Activated naive CD8-positive, alpha-beta T cell treated with anti-CD3 and anti-CD28 coated beads, Interleukin-2, amount 10 ng/mL, durations not matched to agents 7 days and 5 days (primary cell): ENCODE measurements at regions of chr14 and their contacts with region 1.

Region 1: GRCh38 chr14:21263656-21264411 is 5.4 kb downstream of the HNRNPC start:
- DNase-seq: no peak
- ATAC-seq: peak; percentile 71
- H3K4me3 Mint-ChIP-seq: peak overlapping the region; percentile 99
- H3K27ac Mint-ChIP-seq: peak overlapping the region; percentile 81
- H3K4me1 Mint-ChIP-seq: peaks cover 69% of the 10 kb centered on the region
- H3K27me3 Mint-ChIP-seq: no peaks in the 10 kb centered on the region

Region 2: GRCh38 chr14:21197418-21198205 is 66.2 kb before region 1 on chr14:
- POLR2A ChIA-PET with region 1: no interaction called
- DNase-seq: no peak
- ATAC-seq: no peak
- H3K4me3 Mint-ChIP-seq: no peak overlapping the region
- H3K27ac Mint-ChIP-seq: no peak overlapping the region
- H3K4me1 Mint-ChIP-seq: no peaks in the 10 kb centered on the region
- H3K27me3 Mint-ChIP-seq: peaks cover 11% of the 10 kb centered on the region

Region 3: DNA sequence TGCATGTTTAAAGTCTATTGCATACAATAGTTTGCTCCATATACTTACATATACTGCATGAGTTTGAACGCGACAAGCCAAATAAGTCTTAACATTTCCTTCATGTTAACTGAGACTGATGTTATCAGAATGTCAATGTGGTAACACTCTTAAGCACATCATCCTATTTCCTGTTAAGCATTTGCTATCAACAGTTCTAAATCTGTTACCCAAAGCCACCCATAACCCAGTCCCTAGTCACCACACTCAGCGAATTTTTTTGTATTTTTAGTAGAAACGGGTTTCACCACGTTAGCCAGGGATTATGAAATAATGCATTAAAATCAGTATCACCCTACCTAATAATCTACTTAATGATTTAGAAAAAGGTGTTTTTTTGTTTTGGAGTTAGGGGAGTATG is 34.0 kb before region 1 on chr14:
- POLR2A ChIA-PET with region 1: interaction called, 10 read pairs
- DNase-seq: no peak
- ATAC-seq: peak; percentile 98
- H3K4me3 Mint-ChIP-seq: peak overlapping the region; percentile 76
- H3K27ac Mint-ChIP-seq: peak overlapping the region; percentile 91
- H3K4me1 Mint-ChIP-seq: peaks cover 45% of the 10 kb centered on the region
- H3K27me3 Mint-ChIP-seq: no peaks in the 10 kb centered on the region